ENCODE measurements at regions of chr11 and their contacts with region 1.

Region 1: GRCh38 chr11:2532704-2533586 is 88.1 kb downstream of the KCNQ1 start:
- DNase-seq: peak; percentile 90
- H3K4me3 ChIP-seq: peak overlapping the region in 1 of 2 experiments; percentile 34; a peak in 1 of 4 replicates
- H3K27ac ChIP-seq: peak overlapping the region in 1 of 2 experiments; percentile 62; a peak in 2 of 4 replicates
- H3K4me1 ChIP-seq: peaks cover 5 to 9% of the 10 kb centered on the region in 2 experiments; a peak in 2 of 4 replicates
- H3K27me3 ChIP-seq: no peaks in the 10 kb centered on the region
- CTCF ChIP-seq: peak; percentile 98
- EP300 ChIP-seq: no peak
- RAD21 ChIP-seq: peak; percentile 97

Region 2: DNA sequence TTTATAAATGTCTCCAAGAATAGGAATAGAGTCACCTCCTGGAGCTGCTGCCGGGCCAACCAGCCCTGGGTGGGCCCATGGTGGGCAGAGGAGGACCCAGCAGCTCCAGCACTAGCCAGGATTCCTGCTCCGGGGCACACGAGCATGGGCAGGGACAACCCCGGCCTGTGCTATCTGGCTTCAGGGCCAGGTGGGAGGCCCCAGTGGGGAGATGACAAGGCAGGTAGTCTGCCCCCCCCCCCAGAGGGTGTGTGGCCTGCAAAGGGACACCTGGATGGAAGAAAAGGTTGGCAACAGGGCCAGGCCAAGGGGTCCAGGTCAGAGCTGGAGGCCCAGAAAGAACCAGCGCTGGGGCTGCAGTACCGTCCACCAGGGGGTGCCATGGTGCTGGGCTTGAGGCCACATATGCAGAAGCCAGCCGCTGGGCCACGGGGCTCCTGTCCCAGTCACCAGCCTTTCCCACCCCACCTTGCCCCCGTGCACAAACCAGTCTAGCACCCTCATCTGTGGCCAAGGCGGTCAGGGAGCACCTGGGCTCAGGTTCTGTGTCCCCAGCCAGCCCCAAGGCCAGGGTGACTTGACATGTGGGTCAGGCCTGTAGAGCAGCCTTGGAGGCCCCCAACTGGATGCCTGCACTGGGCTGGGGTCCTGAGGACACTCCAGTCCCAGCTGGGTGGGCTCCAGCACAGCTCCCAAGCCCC is 227.7 kb before region 1 on chr11:
- CTCF ChIA-PET with region 1: interaction called, 35 read pairs
- POLR2A ChIA-PET with region 1: no interaction called
- DNase-seq: peak; percentile 85
- H3K4me3 ChIP-seq: peak overlapping the region in 1 of 2 experiments; percentile 27; a peak in 1 of 4 replicates
- H3K27ac ChIP-seq: peak overlapping the region; percentile 82 to 87; a peak in 3 of 4 replicates
- H3K4me1 ChIP-seq: peaks cover 12 to 48% of the 10 kb centered on the region in 2 experiments; a peak in 3 of 4 replicates
- H3K27me3 ChIP-seq: no peaks in the 10 kb centered on the region
- CTCF ChIP-seq: peak; percentile 85
- EP300 ChIP-seq: no peak
- RAD21 ChIP-seq: peak; percentile 88

Region 3: DNA sequence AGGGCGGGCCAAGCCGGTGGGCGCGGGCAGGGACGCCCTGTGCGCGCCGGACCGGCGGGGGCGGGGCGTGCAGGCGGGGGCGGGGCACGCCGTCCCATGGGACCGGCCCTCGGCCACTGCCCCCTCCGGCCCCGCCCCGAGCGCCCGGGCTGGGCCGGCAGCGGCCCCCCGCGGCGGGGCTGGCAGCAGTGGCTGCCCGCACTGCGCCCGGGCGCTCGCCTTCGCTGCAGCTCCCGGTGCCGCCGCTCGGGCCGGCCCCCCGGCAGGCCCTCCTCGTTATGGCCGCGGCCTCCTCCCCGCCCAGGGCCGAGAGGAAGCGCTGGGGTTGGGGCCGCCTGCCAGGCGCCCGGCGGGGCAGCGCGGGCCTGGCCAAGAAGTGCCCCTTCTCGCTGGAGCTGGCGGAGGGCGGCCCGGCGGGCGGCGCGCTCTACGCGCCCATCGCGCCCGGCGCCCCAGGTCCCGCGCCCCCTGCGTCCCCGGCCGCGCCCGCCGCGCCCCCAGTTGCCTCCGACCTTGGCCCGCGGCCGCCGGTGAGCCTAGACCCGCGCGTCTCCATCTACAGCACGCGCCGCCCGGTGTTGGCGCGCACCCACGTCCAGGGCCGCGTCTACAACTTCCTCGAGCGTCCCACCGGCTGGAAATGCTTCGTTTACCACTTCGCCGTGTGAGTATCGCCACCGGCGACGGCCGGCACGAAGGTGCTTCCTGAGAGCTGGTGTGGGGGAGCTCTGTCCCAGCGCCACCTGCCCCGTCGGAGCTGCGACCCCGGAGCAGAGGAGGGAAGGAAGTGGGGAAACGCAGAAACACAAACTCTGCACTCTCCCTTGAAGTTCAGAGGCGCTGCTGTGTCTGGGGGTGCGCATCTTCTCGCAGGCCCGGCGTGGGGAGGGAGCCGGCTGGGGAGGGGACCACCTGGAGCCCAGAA is 87.9 kb before region 1 on chr11 and contains the start of gene KCNQ1:
- CTCF ChIA-PET with region 1: interaction called, 43 read pairs
- POLR2A ChIA-PET with region 1: no interaction called
- DNase-seq: peak; percentile 98
- H3K4me3 ChIP-seq: peak within 1 kb of the TSS in 1 of 2 experiments; percentile 40; a peak in 2 of 4 replicates
- H3K27ac ChIP-seq: no peak within 1 kb of the TSS
- H3K4me1 ChIP-seq: peaks cover 0 to 6% of the 10 kb centered on the region in 2 experiments; a peak in 1 of 4 replicates
- H3K27me3 ChIP-seq: no peaks in the 10 kb centered on the region; the same call in 1 of the 2 replicates
- CTCF ChIP-seq: no peak
- EP300 ChIP-seq: no peak
- RAD21 ChIP-seq: no peak
- polyA plus RNA-seq, gene KCNQ1: 0.05 and 0.15 TPM in 2 replicates

Region 4: DNA sequence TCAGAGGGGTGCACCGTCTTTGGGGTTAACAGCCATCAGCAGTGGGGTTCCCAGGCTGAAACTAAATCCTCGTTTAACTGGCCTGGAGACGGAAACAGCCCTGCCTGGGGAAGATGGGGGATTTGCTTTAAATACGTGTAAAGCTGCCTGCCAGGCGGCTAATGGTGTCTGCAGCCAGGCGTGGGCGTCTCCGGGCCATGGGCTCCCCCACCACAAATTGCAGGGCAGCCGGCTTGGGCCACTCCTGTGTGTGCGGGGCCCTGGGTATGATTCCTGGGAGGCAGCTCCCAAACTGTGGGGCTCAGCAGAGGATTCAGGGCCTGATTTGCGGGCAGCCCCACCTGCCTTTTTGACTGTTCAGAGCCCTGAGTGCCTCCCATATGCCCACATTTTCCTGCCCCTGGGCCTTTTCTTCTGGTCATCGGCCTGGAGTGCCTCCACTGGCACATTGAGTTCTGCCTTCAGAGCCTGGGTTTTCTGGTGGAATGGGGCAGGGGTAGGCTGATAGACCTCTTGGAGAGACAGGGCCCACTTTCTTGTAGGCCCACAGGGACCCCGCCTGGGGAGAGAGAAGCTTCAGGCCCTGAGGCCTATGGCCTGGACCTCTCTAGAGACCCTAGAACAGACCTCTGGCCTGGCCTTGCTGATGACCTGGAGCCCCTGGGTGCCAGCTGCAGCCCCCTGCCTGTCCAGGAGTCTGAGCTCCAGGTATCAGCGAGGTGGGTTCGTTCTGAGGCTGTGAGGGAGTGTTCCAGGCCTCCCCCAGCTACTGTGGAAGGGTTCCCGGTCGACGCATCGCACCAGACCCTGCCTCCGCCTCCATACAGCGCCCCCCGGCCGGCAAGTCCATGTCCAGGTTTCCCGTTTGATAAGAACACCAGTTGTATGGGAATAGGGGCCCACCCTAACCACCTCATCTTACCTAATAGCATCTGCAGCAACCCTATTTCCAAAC is 22.7 kb after region 1 on chr11:
- CTCF ChIA-PET with region 1: interaction called, 13 read pairs
- POLR2A ChIA-PET with region 1: no interaction called
- DNase-seq: no peak
- H3K4me3 ChIP-seq: no peak overlapping the region
- H3K27ac ChIP-seq: no peak overlapping the region
- H3K4me1 ChIP-seq: no peaks in the 10 kb centered on the region
- H3K27me3 ChIP-seq: no peaks in the 10 kb centered on the region
- CTCF ChIP-seq: no peak
- EP300 ChIP-seq: no peak
- RAD21 ChIP-seq: no peak

Region 5: GRCh38 chr11:2708151-2708581 is 175.2 kb after region 1 on chr11:
- CTCF ChIA-PET with region 1: interaction called, 26 read pairs
- POLR2A ChIA-PET with region 1: no interaction called
- DNase-seq: no peak
- H3K4me3 ChIP-seq: no peak overlapping the region
- H3K27ac ChIP-seq: peak overlapping the region in 1 of 2 experiments; percentile 76; a peak in 1 of 4 replicates
- H3K4me1 ChIP-seq: peaks cover 0 to 60% of the 10 kb centered on the region in 2 experiments; a peak in 1 of 4 replicates
- H3K27me3 ChIP-seq: no peaks in the 10 kb centered on the region
- CTCF ChIP-seq: no peak
- EP300 ChIP-seq: no peak
- RAD21 ChIP-seq: no peak

Region 6: DNA sequence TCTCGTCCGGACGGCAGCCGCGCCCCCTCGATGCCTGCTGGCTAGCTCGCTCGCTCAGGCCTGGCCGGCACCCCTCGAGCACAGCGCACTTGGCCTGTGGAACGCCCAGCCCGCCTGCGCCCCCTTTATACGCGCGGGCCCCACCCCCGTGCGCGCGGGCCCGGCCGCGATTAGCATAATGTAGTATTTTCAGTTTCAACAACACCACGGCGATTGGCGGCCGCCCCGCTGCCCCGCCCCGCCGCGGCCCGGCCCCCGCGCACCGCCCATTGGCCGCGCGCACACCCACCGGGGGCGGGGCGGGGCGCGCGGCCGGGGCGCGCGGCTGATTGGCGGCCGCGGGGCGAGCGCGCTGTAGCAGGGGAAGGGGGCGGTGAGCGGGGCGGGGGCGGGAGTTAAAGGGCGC is 352.7 kb after region 1 on chr11 and contains the start of gene CDKN1C:
- CTCF ChIA-PET with region 1: interaction called, 1,016 read pairs
- POLR2A ChIA-PET with region 1: interaction called, 14 read pairs
- DNase-seq: peak; percentile 98
- H3K4me3 ChIP-seq: peak within 1 kb of the TSS; percentile 58 to 65
- H3K27ac ChIP-seq: peak within 1 kb of the TSS in 1 of 2 experiments; percentile 83; a peak in 1 of 4 replicates
- H3K4me1 ChIP-seq: peaks cover 3 to 36% of the 10 kb centered on the region in 2 experiments; a peak in 1 of 4 replicates
- H3K27me3 ChIP-seq: no peaks in the 10 kb centered on the region
- CTCF ChIP-seq: no peak
- EP300 ChIP-seq: no peak
- RAD21 ChIP-seq: no peak
- polyA plus RNA-seq, gene CDKN1C: 1.1 and 1.6 TPM in 2 replicates